Right cardiac atrium (tissue), 5 donors: ENCODE measurements at regions of chr13 and their contacts with region 1.

Region 1: DNA sequence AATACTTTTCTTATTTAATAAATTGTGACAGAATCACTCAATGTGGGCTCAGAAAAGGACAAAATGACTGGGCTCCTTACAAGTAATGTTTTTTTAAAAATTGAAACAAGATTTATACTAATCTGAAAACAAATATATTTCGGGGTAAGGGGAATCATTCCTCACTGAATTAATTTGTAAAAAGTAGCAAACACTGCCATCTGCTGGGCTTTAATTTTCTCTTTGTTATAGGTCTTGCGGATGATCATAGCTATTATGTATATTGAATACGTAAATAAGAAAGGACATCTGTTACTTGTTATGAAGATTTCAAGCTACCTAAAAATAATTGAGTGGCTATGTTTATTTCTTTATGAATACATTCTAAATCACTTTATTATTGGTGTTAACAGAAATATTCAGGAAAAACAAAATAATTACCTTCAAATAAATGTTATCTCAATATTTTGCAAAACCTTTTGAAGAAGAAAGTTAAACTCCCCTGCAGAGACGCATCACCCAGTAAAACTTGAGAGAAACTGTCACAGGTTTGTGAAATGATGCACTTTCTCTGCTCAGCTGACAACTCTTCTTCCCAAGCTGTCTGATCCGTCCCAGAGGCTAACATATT is 17.8 kb upstream of the ENOX1 start:
- DNase-seq: no peak
- ATAC-seq: peak in 1 of 2 donors; percentile 46
- H3K4me3 ChIP-seq: no peak overlapping the region
- H3K27ac ChIP-seq: no peak overlapping the region
- H3K4me1 ChIP-seq: no peaks in the 10 kb centered on the region
- H3K27me3 ChIP-seq: no peaks in the 10 kb centered on the region

Region 2: GRCh38 chr13:42969558-42970172 is 834.9 kb before region 1 on chr13:
- intact Hi-C with region 1: loop called in 1 of 4 experiments (anchors 5 kb)
- DNase-seq: peak; percentile 79 to 90 (median 88)
- ATAC-seq: peak; percentile 83 to 88
- H3K4me3 ChIP-seq: no peak overlapping the region
- H3K27ac ChIP-seq: no peak overlapping the region
- H3K4me1 ChIP-seq: peaks cover 2% of the 10 kb centered on the region
- H3K27me3 ChIP-seq: no peaks in the 10 kb centered on the region

Region 3: GRCh38 chr13:43085545-43085944 is 719.0 kb before region 1 on chr13:
- intact Hi-C with region 1: loop called (anchors 5 to 10 kb)
- DNase-seq: no peak
- ATAC-seq: no peak
- H3K4me3 ChIP-seq: no peak overlapping the region
- H3K27ac ChIP-seq: no peak overlapping the region
- H3K4me1 ChIP-seq: no peaks in the 10 kb centered on the region
- H3K27me3 ChIP-seq: no peaks in the 10 kb centered on the region

Region 4: GRCh38 chr13:43094901-43095300 is 709.7 kb before region 1 on chr13:
- intact Hi-C with region 1: loop called in 1 of 4 experiments (anchors 10 kb)
- DNase-seq: no peak
- ATAC-seq: no peak
- H3K4me3 ChIP-seq: no peak overlapping the region
- H3K27ac ChIP-seq: no peak overlapping the region
- H3K4me1 ChIP-seq: no peaks in the 10 kb centered on the region
- H3K27me3 ChIP-seq: no peaks in the 10 kb centered on the region

Region 5: DNA sequence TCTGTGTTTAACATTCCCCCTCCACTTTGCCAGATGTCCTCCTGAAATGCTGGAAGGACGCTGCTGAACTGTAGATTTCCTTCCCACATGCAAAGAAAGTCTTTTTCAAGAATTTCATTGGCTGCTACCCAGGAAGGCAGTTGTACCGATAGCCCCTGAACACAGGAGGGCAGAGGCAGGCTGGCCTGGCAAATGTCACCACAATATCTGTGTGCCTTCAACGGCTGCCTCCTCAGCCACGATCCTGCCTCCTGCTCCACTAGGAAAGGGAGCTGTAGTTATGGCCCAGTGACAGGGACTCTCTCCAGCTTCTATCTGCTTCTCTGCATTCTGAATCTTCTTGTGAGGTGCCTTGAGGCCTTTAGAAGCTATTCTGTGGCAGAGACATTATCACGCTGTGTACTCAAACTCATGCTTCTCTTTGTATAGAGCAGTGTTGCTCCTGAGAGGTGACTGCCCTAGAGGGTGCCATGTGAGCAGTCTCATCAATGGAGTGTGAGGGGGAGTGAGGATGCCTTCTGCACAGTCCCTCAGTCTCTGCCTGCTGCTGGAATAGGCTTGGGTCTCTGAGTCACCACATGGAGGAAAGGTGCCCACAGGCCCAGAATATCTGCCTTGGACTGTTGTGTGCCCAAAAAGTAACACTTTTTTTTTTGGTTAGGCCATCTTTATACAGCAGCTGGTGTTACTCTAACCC is 501.4 kb before region 1 on chr13:
- intact Hi-C with region 1: loop called in 1 of 4 experiments (anchors 10 kb)
- DNase-seq: peak; percentile 55 to 78 (median 77)
- ATAC-seq: peak; percentile 87
- H3K4me3 ChIP-seq: no peak overlapping the region
- H3K27ac ChIP-seq: no peak overlapping the region
- H3K4me1 ChIP-seq: no peaks in the 10 kb centered on the region
- H3K27me3 ChIP-seq: no peaks in the 10 kb centered on the region

Region 6: DNA sequence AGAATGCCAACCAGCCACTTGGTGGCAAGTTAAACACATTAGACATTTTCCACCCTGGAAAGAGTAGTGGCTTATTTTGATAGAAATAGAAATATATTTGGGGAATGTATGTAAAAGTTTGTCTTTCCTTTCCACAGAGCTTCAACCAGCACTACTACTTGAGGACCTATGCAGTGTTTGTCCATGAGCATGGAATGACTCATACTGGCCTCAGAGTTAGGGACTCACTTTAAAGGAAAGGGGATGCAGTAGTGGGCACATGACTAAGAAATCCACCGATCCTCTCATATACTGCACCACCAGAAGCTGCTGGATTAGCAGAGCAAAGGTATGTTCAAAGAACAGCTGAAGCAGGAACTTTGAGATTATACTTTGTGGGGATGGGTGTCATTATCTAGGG is 137.7 kb after region 1 on chr13:
- intact Hi-C with region 1: no loop called
- DNase-seq: no peak
- ATAC-seq: no peak
- H3K4me3 ChIP-seq: no peak overlapping the region
- H3K27ac ChIP-seq: no peak overlapping the region
- H3K4me1 ChIP-seq: no peaks in the 10 kb centered on the region
- H3K27me3 ChIP-seq: no peaks in the 10 kb centered on the region

Region 7: GRCh38 chr13:44141725-44142539 is 337.4 kb after region 1 on chr13:
- intact Hi-C with region 1: no loop called
- DNase-seq: peak; percentile 98 to 100 (median 99)
- ATAC-seq: peak; percentile 100
- H3K4me3 ChIP-seq: peak overlapping the region; percentile 77
- H3K27ac ChIP-seq: peak overlapping the region; percentile 99
- H3K4me1 ChIP-seq: peaks cover 5% of the 10 kb centered on the region
- H3K27me3 ChIP-seq: no peaks in the 10 kb centered on the region